ENCODE measurements at regions of chr15 and their contacts with region 1.

Region 1: GRCh38 chr15:69576035-69576526 is 123.5 kb downstream of the RPLP1 start:
- DNase-seq: peak; percentile 43 to 58
- ATAC-seq: peak; percentile 75 to 92 (median 86)
- H3K4me3 ChIP-seq: no peak overlapping the region
- H3K27ac ChIP-seq: no peak overlapping the region
- H3K4me1 ChIP-seq: peaks cover 0 to 31% (median 0%) of the 10 kb centered on the region in 9 donors
- H3K27me3 ChIP-seq: peaks cover 0 to 31% (median 17%) of the 10 kb centered on the region in 7 donors
- CTCF ChIP-seq: peak; percentile 49 to 78 (median 71)

Region 2: DNA sequence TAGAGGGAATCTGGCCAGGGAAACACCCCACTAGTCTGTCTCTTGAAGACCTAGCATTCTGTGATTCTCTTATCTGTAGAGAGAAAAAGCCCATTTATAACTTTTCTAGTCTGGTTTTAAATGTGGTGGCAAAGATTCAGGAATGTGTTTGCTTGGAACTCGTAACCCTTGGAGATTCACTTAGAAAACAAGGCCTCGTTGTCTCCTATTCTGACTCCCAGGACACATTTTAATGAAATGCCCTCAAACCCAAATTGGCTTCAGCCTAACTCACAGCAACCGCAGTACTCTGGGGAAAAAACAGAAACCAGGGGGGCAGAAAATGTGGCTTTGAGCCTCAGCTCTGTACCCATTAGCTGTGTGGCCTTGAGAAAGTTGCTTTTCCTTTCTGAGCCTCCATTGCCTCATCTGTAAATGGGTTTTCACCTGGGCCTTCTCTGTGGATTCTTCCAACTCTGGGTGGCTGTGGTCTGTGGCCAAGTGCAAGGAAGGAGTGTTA is 87.0 kb before region 1 on chr15:
- intact Hi-C with region 1: loop called in 1 of 10 experiments (anchors 10 kb)
- DNase-seq: no peak
- ATAC-seq: peak in 5 of 8 donors; percentile 12 to 53 (median 28)
- H3K4me3 ChIP-seq: no peak overlapping the region
- H3K27ac ChIP-seq: peak overlapping the region in 2 of 10 donors; percentile 4 to 16
- H3K4me1 ChIP-seq: peaks cover 0 to 14% (median 0%) of the 10 kb centered on the region in 9 donors
- H3K27me3 ChIP-seq: no peaks in the 10 kb centered on the region
- CTCF ChIP-seq: no peak

Region 3: DNA sequence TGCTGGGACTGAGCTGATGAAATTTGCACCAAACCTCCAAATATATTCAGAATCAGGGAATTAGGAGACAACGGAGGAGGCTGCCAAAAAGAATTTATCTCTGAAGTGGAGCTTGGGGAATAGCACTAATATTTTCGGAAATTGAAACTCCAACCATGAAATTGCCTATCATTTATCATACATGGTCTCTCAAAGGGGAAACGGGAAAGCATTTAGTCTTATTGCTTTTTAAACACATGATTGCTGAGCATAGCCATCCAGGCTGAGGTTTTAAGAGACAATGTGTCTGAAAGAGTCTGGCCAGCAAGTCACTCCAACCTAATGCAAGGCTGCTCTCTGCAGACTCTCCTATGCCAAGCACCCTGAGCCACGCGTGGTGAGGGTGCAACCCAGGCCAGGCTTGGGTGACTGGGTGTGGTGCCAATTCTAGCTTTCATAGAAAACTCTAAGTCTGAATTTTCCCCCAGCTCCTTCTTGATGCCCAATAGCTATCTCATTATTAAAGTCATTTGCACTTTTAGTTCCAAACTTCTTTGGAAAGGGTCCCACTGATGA is 76.7 kb after region 1 on chr15:
- intact Hi-C with region 1: loop called in 2 of 10 experiments (anchors 5 kb)
- DNase-seq: no peak
- ATAC-seq: peak in 1 of 8 donors; percentile 51
- H3K4me3 ChIP-seq: no peak overlapping the region
- H3K27ac ChIP-seq: no peak overlapping the region
- H3K4me1 ChIP-seq: peaks cover 0 to 12% (median 0%) of the 10 kb centered on the region in 9 donors
- H3K27me3 ChIP-seq: peaks cover 0 to 70% (median 49%) of the 10 kb centered on the region in 7 donors
- CTCF ChIP-seq: peak in 4 of 9 donors; percentile 26 to 31 (median 28)